CD8-positive, alpha-beta memory T cell (primary cell): ENCODE measurements at regions of chr1 and their contacts with region 1.

Region 1: GRCh38 chr1:39973503-39974135 is 18.7 kb downstream of the MFSD2A start:
- DNase-seq: peak; percentile 56 to 78 (median 62)
- H3K4me3 ChIP-seq: no peak overlapping the region
- H3K4me3 Mint-ChIP-seq: no peak overlapping the region
- H3K27ac ChIP-seq: no peak overlapping the region
- H3K27ac Mint-ChIP-seq: no peak overlapping the region
- H3K4me1 ChIP-seq: no peaks in the 10 kb centered on the region
- H3K4me1 Mint-ChIP-seq: peaks cover 5 to 6% (median 5%) of the 10 kb centered on the region in 3 donors
- H3K27me3 ChIP-seq: no peaks in the 10 kb centered on the region
- H3K27me3 Mint-ChIP-seq: peaks cover 0 to 2% of the 10 kb centered on the region in 2 donors

Region 2: GRCh38 chr1:39816415-39817090 is 157.1 kb before region 1 on chr1:
- CTCF ChIA-PET with region 1: interaction called, 55 read pairs
- POLR2A ChIA-PET with region 1: no interaction called
- DNase-seq: peak; percentile 32 to 67 (median 51)
- H3K4me3 ChIP-seq: no peak overlapping the region
- H3K4me3 Mint-ChIP-seq: peak overlapping the region; percentile 18 to 88 (median 79)
- H3K27ac ChIP-seq: no peak overlapping the region
- H3K27ac Mint-ChIP-seq: no peak overlapping the region
- H3K4me1 ChIP-seq: peaks cover 5% of the 10 kb centered on the region
- H3K4me1 Mint-ChIP-seq: peaks cover 5 to 11% (median 6%) of the 10 kb centered on the region in 3 donors
- H3K27me3 ChIP-seq: peaks cover 5% of the 10 kb centered on the region
- H3K27me3 Mint-ChIP-seq: peaks cover 3 to 30% of the 10 kb centered on the region in 2 donors

Region 3: DNA sequence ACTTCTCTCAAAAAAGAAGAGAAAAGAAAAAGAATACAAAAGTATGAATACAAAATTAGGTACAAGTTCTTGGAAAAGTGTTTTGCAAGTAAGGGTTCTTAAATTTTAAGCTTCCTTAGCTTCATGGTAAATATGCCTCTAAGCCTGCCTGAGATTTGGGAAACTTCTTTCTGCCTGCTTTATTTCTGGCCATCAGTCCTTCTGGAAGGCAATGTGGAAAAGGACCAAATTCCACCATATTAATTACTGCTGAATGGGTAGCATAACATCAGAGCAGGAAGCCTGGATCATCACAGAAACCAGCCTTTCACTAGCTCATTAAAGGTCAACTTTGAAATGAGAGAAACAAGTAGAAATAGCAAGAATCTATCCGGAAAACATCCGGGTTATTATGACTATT is 27.8 kb after region 1 on chr1:
- CTCF ChIA-PET with region 1: interaction called, 10 read pairs
- POLR2A ChIA-PET with region 1: no interaction called
- DNase-seq: no peak
- H3K4me3 ChIP-seq: no peak overlapping the region
- H3K4me3 Mint-ChIP-seq: no peak overlapping the region
- H3K27ac ChIP-seq: no peak overlapping the region
- H3K27ac Mint-ChIP-seq: peak overlapping the region in 1 of 8 donors; percentile 5
- H3K4me1 ChIP-seq: peaks cover under 1% of the 10 kb centered on the region
- H3K4me1 Mint-ChIP-seq: peaks cover 18 to 28% (median 19%) of the 10 kb centered on the region in 3 donors
- H3K27me3 ChIP-seq: no peaks in the 10 kb centered on the region
- H3K27me3 Mint-ChIP-seq: peaks cover 1 to 7% of the 10 kb centered on the region in 2 donors

Region 4: DNA sequence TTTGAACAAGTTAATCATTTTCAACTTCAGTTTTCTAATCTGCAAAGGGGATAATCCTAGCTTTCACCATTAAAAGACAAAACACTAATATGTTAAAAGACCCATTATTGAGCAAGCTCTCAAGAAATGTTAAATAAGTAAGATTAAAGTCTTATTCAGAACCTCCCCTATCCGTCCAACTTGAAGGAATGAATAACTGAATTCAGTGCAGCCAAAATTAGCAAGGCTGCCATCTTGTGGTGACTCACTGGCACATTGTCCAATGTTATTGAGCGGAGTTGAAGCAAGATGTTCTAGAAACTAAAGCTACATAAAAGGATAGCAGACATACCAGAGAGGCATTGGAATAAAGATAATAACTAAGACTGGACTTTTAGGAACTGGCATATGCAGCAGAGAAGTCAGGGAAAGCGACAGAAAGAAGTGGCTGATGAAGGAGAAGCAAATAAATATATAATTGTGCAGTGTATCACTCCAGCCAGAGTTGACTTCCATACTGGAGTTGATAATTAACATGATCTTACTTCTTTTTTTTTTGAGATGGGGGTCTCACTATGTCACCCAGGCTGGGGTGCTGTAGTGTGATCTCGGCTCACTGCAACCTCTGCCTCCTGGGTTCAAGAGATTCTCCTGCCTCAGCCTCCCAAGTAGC is 58.7 kb after region 1 on chr1:
- CTCF ChIA-PET with region 1: interaction called, 17 read pairs
- POLR2A ChIA-PET with region 1: no interaction called
- DNase-seq: peak; percentile 21 to 66 (median 38)
- H3K4me3 ChIP-seq: no peak overlapping the region
- H3K4me3 Mint-ChIP-seq: peak overlapping the region in 1 of 7 donors; percentile 1
- H3K27ac ChIP-seq: no peak overlapping the region
- H3K27ac Mint-ChIP-seq: peak overlapping the region in 6 of 8 donors; percentile 12 to 89 (median 70)
- H3K4me1 ChIP-seq: peaks cover 50% of the 10 kb centered on the region
- H3K4me1 Mint-ChIP-seq: peaks cover 37 to 53% (median 45%) of the 10 kb centered on the region in 3 donors
- H3K27me3 ChIP-seq: no peaks in the 10 kb centered on the region
- H3K27me3 Mint-ChIP-seq: peaks cover 0 to 1% of the 10 kb centered on the region in 2 donors